Activated naive CD4-positive, alpha-beta T cell treated with anti-CD3 and anti-CD28 coated beads for 36 hours (primary cell): ENCODE measurements at regions of chr13 and their contacts with region 1.

Region 1: GRCh38 chr13:29850224-29850898 is at the start of gene UBL3:
- DNase-seq: peak; percentile 96
- H3K4me3 Mint-ChIP-seq: peak within 1 kb of the TSS; percentile 83
- H3K27ac Mint-ChIP-seq: peak within 1 kb of the TSS; percentile 97
- H3K4me1 Mint-ChIP-seq: peaks cover 28% of the 10 kb centered on the region
- H3K27me3 Mint-ChIP-seq: no peaks in the 10 kb centered on the region
- total RNA-seq, gene UBL3: 8.3 to 8.5 TPM

Region 2: DNA sequence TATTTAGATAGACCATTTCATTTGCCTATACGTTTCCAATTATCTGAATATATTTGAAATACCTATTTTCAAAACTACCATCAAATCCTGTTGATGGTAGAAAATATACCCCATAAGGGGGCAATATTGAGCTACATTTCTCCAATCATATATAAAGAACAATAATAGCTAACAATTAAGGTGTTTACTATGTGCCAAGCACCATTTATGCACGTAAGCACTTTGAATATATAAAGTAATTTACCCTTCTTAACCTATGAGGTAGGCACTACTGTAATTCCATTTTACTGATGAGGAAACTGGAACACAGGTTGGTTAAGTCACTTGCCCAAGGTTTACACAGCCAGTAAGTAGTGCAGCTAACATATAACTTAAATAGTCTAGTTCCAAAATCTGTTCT is 79.1 kb before region 1 on chr13:
- CTCF ChIA-PET with region 1: interaction called, 8 read pairs
- intact Hi-C with region 1: loop called (anchors 1 kb)
- DNase-seq: no peak
- H3K4me3 Mint-ChIP-seq: no peak overlapping the region
- H3K27ac Mint-ChIP-seq: no peak overlapping the region
- H3K4me1 Mint-ChIP-seq: peaks cover 2% of the 10 kb centered on the region
- H3K27me3 Mint-ChIP-seq: no peaks in the 10 kb centered on the region

Region 3: GRCh38 chr13:29817604-29818378 is 32.6 kb before region 1 on chr13:
- CTCF ChIA-PET with region 1: interaction called, 4 read pairs
- intact Hi-C with region 1: loop called (anchors 1 kb)
- DNase-seq: no peak
- H3K4me3 Mint-ChIP-seq: peak overlapping the region; percentile 11
- H3K27ac Mint-ChIP-seq: peak overlapping the region; percentile 65
- H3K4me1 Mint-ChIP-seq: peaks cover 50% of the 10 kb centered on the region
- H3K27me3 Mint-ChIP-seq: no peaks in the 10 kb centered on the region

Region 4: GRCh38 chr13:29923554-29924481 is 73.5 kb after region 1 on chr13:
- CTCF ChIA-PET with region 1: interaction called, 5 read pairs
- intact Hi-C with region 1: loop called (anchors 1 kb)
- DNase-seq: peak; percentile 75
- H3K4me3 Mint-ChIP-seq: no peak overlapping the region
- H3K27ac Mint-ChIP-seq: no peak overlapping the region
- H3K4me1 Mint-ChIP-seq: peaks cover 19% of the 10 kb centered on the region
- H3K27me3 Mint-ChIP-seq: no peaks in the 10 kb centered on the region

Region 5: GRCh38 chr13:30306762-30307193 is 456.4 kb after region 1 on chr13:
- CTCF ChIA-PET with region 1: no interaction called
- intact Hi-C with region 1: loop called (anchors 2 kb)
- DNase-seq: peak; percentile 94
- H3K4me3 Mint-ChIP-seq: peak overlapping the region; percentile 83
- H3K27ac Mint-ChIP-seq: peak overlapping the region; percentile 76
- H3K4me1 Mint-ChIP-seq: peaks cover 14% of the 10 kb centered on the region
- H3K27me3 Mint-ChIP-seq: no peaks in the 10 kb centered on the region